K562 (cell line): ENCODE measurements at regions of chr6 and their contacts with region 1.

Region 1: DNA sequence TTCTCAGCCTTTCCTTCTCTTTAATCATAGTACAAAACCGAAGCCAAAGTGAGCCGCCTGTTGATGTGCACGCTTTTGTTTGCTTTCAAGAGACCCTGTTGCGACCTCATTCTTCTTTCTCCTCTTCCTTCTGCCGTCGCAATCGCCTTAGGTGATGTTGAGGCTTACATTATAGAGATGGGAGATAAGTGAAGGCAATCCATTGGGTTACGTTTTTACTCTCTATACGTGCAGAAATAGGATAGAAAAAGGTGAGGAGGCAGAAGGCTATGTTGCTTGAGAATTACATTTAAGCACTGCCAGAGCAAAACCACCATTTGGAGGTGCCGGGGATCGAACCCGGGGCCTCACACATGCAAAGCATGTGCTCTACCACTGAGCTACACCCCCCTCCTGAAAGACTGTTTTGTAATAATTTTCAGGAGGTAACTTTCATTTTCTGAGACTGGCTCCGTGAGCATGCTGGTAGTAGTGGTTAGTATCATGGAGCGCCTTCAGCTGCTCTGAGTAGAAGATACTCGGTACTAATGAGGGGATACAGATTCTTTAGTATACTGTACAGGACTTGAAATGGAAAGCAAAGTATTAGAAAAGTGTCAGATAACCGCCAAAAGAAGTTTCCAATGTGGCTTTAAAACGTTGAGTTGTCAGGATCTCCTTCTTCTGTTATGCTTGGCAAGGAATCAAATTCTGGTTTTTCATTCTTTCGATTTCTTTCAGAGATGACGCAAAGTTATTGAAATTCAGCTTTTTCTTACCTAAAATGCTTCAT is 165.6 kb downstream of the TRIM27 start:
- DNase-seq: peak; percentile 70 to 96 (median 72)
- ATAC-seq: peak; percentile 73
- H3K4me3 ChIP-seq: peak overlapping the region; percentile 60
- H3K27ac ChIP-seq: peak overlapping the region; percentile 96
- H3K4me1 ChIP-seq: peaks cover 13 to 18% of the 10 kb centered on the region in 2 experiments; a peak in 4 of 5 replicates
- H3K27me3 ChIP-seq: no peaks in the 10 kb centered on the region
- CTCF ChIP-seq: no peak
- EP300 ChIP-seq: peak; percentile 87
- POLR2A ChIP-seq: 0 out of 2 replicates have a peak, but pooled peaks have one; percentile 61
- RAD21 ChIP-seq: peak in 1 of 2 experiments; percentile 32; a peak in 2 of 4 replicates

Region 2: DNA sequence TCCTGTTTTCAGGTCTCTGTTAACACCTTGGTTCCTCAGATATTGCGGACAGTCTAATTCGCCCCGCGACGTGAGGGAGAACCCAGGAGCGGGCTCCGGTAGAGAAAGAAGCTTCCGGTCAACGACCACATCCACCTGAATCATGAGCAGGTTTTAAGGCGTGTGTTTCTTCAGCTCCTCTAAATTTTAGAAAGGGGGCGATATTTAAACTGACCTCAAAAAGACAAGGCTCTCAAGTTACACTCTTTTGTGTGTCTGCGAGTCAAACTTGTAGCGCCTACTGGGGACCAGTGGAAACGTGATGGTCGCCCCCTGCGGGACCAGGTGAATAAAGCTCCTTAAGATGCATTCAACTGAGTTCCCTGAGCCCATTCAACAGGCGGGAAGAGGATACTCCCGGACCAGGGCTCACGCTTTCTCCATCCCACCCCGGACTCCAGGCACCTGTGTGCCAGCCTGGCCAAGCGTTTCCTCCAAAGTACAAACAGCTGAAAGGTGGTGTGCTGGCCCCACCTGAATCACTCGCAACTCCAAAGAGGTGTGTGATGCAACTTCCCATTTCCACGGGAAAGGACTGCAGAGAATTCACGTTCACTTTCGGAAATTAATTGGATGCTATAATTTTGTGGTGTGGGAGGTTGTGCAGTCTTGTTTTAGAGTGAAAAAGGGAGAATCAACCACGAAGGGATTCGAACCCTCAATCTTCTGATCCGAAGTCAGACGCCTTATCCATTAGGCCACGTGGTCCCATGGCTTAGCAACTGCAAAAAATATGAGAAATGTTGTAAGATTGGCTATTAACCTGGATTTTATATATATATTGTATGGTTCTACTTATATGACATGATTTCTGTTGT is 215.6 kb before region 1 on chr6:
- CTCF ChIA-PET with region 1: no interaction called
- POLR2A ChIA-PET with region 1: no interaction called
- in situ Hi-C with region 1: no loop called
- intact Hi-C with region 1: no loop called
- DNase-seq: peak; percentile 90 to 98 (median 92)
- ATAC-seq: peak; percentile 95
- H3K4me3 ChIP-seq: peak overlapping the region; percentile 49
- H3K27ac ChIP-seq: peak overlapping the region; percentile 88
- H3K4me1 ChIP-seq: peaks cover 19 to 30% of the 10 kb centered on the region in 2 experiments
- H3K27me3 ChIP-seq: no peaks in the 10 kb centered on the region
- CTCF ChIP-seq: peak; percentile 98 to 99 (median 99)
- EP300 ChIP-seq: peak; percentile 67
- POLR2A ChIP-seq: no peak
- RAD21 ChIP-seq: peak; percentile 89 to 90

Region 3: GRCh38 chr6:28725890-28726348 is 32.3 kb before region 1 on chr6:
- CTCF ChIA-PET with region 1: no interaction called
- POLR2A ChIA-PET with region 1: interaction called, 16 read pairs
- in situ Hi-C with region 1: no loop called
- intact Hi-C with region 1: loop called (anchors 2 kb)
- DNase-seq: peak; percentile 51 to 93 (median 70)
- ATAC-seq: peak; percentile 50
- H3K4me3 ChIP-seq: peak overlapping the region; percentile 63
- H3K27ac ChIP-seq: peak overlapping the region; percentile 80; the same call in 2 of the 3 replicates
- H3K4me1 ChIP-seq: peaks cover 7 to 10% of the 10 kb centered on the region in 2 experiments; a peak in 4 of 5 replicates
- H3K27me3 ChIP-seq: no peaks in the 10 kb centered on the region
- CTCF ChIP-seq: no peak
- EP300 ChIP-seq: peak; percentile 65
- POLR2A ChIP-seq: no peak
- RAD21 ChIP-seq: 0 out of 4 replicates have a peak, but pooled peaks of 1 of the 2 experiments have one; percentile 9

Region 4: DNA sequence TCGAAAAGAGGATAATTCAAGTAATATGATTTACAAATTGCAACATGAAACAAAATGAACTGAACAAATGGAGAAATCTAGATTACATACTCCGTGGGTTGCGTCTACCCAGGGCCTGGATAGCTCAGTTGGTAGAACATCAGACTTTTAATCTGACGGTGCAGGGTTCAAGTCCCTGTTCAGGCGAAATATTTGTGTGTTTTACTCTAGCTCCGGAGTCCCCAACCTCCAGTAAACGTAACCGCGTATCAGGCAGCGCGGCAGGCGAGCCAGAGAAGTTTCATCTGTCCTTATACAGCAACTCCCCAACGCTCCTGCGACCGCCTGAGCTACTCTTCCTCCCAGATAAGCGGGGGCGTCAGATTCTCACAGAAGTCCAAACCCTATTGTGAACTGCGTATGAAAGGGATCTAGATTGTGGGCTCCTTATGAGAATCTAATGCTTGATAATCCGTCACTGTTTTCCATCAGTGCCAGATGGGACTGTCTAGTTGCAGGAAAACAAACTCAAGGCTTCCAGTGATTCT is 10.5 kb before region 1 on chr6:
- CTCF ChIA-PET with region 1: no interaction called
- POLR2A ChIA-PET with region 1: interaction called, 19 read pairs
- in situ Hi-C with region 1: no loop called
- intact Hi-C with region 1: loop called (anchors 2 kb)
- DNase-seq: peak; percentile 77 to 99 (median 83)
- ATAC-seq: peak; percentile 84
- H3K4me3 ChIP-seq: peak overlapping the region; percentile 46
- H3K27ac ChIP-seq: peak overlapping the region; percentile 64
- H3K4me1 ChIP-seq: peaks cover 8 to 20% of the 10 kb centered on the region in 2 experiments; a peak in 4 of 5 replicates
- H3K27me3 ChIP-seq: no peaks in the 10 kb centered on the region
- CTCF ChIP-seq: no peak
- EP300 ChIP-seq: peak; percentile 88
- POLR2A ChIP-seq: no peak
- RAD21 ChIP-seq: peak in 1 of 2 experiments; percentile 45; a peak in 3 of 4 replicates

Region 5: GRCh38 chr6:28769626-28770402 is 11.6 kb after region 1 on chr6:
- CTCF ChIA-PET with region 1: no interaction called
- POLR2A ChIA-PET with region 1: interaction called, 33 read pairs
- in situ Hi-C with region 1: no loop called
- intact Hi-C with region 1: no loop called
- DNase-seq: peak; percentile 60 to 87 (median 66)
- ATAC-seq: peak; percentile 82
- H3K4me3 ChIP-seq: no peak overlapping the region
- H3K27ac ChIP-seq: no peak overlapping the region
- H3K4me1 ChIP-seq: peaks cover 24 to 32% of the 10 kb centered on the region in 2 experiments; a peak in 4 of 5 replicates
- H3K27me3 ChIP-seq: no peaks in the 10 kb centered on the region
- CTCF ChIP-seq: peak; percentile 72 to 80 (median 78)
- EP300 ChIP-seq: no peak
- POLR2A ChIP-seq: no peak
- RAD21 ChIP-seq: peak; percentile 88 to 92

Region 6: DNA sequence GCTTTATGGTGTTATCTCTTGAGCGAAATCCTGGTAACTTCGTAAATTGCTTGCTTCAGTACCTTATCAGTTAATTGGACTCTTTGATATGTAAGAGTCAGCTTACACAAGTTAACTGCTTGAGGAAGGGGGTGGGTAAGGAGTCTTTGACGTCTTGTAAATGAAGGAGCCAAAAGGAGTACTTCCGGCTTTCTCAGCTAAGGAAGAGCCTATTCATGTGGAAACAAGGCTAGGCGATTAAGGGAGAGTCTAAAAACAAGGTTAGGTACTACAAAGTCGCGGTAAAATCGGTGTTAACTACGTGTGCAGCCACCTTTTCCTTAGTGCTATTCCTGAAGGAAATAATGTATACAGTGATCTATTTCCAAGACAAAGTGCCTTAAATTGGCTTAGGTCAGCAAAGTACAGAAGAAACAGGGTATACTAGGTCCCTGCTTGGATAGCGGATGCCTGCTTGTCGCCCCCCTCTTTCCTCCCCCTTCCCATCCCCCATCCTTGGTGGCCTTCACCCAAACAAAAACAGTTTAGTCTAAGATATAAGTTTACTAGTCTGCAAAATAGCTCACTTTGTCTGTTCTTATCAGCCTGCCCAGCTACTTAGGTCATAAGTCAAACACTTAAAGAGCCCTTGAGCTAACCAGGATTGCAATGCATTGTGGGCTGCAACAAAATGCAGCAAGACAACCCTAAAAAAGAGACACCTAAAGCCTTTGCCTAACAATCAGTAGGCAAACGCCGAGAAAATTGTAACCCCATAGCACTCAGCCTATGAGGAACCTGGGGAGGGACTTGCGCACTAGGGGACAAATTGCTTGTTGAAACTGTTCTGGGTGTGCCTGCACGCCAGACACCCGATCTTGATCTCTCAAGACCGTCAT is 18.3 kb after region 1 on chr6:
- CTCF ChIA-PET with region 1: no interaction called
- POLR2A ChIA-PET with region 1: interaction called, 38 read pairs
- in situ Hi-C with region 1: no loop called
- intact Hi-C with region 1: no loop called
- DNase-seq: peak in 3 of 4 experiments; percentile 15 to 83 (median 30)
- ATAC-seq: peak; percentile 83
- H3K4me3 ChIP-seq: peak overlapping the region; percentile 26
- H3K27ac ChIP-seq: peak overlapping the region; percentile 67
- H3K4me1 ChIP-seq: peaks cover 22 to 30% of the 10 kb centered on the region in 2 experiments
- H3K27me3 ChIP-seq: no peaks in the 10 kb centered on the region
- CTCF ChIP-seq: no peak
- EP300 ChIP-seq: peak; percentile 50; the same call in 1 of the 2 replicates
- POLR2A ChIP-seq: 0 out of 2 replicates have a peak, but pooled peaks have one; percentile 47
- RAD21 ChIP-seq: 0 out of 4 replicates have a peak, but pooled peaks of 1 of the 2 experiments have one; percentile 21

Region 7: GRCh38 chr6:28789553-28790083 is 31.4 kb after region 1 on chr6:
- CTCF ChIA-PET with region 1: no interaction called
- POLR2A ChIA-PET with region 1: interaction called, 15 read pairs
- in situ Hi-C with region 1: no loop called
- intact Hi-C with region 1: no loop called
- DNase-seq: peak; percentile 62 to 91 (median 63)
- ATAC-seq: peak; percentile 78
- H3K4me3 ChIP-seq: peak overlapping the region; percentile 66
- H3K27ac ChIP-seq: peak overlapping the region; percentile 83
- H3K4me1 ChIP-seq: peaks cover 9 to 10% of the 10 kb centered on the region in 2 experiments; a peak in 4 of 5 replicates
- H3K27me3 ChIP-seq: no peaks in the 10 kb centered on the region
- CTCF ChIP-seq: no peak
- EP300 ChIP-seq: peak; percentile 65
- POLR2A ChIP-seq: no peak
- RAD21 ChIP-seq: peak in 1 of 2 experiments; percentile 21; a peak in 2 of 4 replicates

Region 8: DNA sequence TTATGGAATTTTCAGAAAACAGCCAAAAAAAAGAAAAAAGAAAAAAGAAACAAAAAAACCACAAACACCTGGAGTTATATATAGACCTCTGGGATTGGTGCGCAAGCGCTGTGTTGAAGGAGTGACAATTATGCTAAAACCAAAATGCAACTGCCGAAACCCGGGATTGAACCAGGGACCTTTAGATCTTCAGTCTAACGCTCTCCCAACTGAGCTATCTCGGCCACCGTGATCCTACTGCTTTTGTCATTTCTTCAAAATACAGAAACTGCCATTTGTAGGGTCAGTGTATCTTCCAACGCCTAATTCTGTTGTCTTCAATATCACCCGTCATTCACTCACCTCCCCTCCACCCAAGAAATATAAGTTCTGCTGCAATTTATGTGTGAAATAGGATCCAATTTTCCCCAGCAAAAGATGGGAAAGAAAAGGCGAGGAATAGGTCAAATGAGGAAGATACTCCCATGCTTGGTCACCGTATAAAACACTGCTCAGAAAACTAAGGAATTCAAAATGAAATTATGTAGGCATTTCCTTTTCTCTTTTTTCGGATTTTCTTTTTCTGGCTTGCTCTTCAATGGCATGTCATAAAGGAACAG is 49.5 kb after region 1 on chr6:
- CTCF ChIA-PET with region 1: no interaction called
- POLR2A ChIA-PET with region 1: interaction called, 13 read pairs
- in situ Hi-C with region 1: no loop called
- intact Hi-C with region 1: no loop called
- DNase-seq: peak; percentile 63 to 95 (median 70)
- ATAC-seq: peak; percentile 49
- H3K4me3 ChIP-seq: peak overlapping the region; percentile 52
- H3K27ac ChIP-seq: peak overlapping the region; percentile 25
- H3K4me1 ChIP-seq: peaks cover 11 to 12% of the 10 kb centered on the region in 2 experiments; a peak in 4 of 5 replicates
- H3K27me3 ChIP-seq: no peaks in the 10 kb centered on the region
- CTCF ChIP-seq: no peak
- EP300 ChIP-seq: peak; percentile 79
- POLR2A ChIP-seq: no peak
- RAD21 ChIP-seq: no peak; a peak in 1 of 4 replicates